ENCODE measurements at regions of chr3 and their contacts with region 1.

Region 1: GRCh38 chr3:151468284-151468917 is 7.5 kb upstream of the IGSF10 start:
- DNase-seq: peak; percentile 48
- ATAC-seq: peak; percentile 60
- H3K4me3 Mint-ChIP-seq: no peak overlapping the region
- H3K27ac Mint-ChIP-seq: no peak overlapping the region
- H3K4me1 Mint-ChIP-seq: no peaks in the 10 kb centered on the region
- H3K27me3 Mint-ChIP-seq: peaks cover 20% of the 10 kb centered on the region

Region 2: GRCh38 chr3:150890298-150891230 is 577.8 kb before region 1 on chr3:
- CTCF ChIA-PET with region 1: no interaction called
- DNase-seq: no peak
- ATAC-seq: no peak
- H3K4me3 Mint-ChIP-seq: no peak overlapping the region
- H3K27ac Mint-ChIP-seq: no peak overlapping the region
- H3K4me1 Mint-ChIP-seq: no peaks in the 10 kb centered on the region
- H3K27me3 Mint-ChIP-seq: peaks cover 20% of the 10 kb centered on the region

Region 3: DNA sequence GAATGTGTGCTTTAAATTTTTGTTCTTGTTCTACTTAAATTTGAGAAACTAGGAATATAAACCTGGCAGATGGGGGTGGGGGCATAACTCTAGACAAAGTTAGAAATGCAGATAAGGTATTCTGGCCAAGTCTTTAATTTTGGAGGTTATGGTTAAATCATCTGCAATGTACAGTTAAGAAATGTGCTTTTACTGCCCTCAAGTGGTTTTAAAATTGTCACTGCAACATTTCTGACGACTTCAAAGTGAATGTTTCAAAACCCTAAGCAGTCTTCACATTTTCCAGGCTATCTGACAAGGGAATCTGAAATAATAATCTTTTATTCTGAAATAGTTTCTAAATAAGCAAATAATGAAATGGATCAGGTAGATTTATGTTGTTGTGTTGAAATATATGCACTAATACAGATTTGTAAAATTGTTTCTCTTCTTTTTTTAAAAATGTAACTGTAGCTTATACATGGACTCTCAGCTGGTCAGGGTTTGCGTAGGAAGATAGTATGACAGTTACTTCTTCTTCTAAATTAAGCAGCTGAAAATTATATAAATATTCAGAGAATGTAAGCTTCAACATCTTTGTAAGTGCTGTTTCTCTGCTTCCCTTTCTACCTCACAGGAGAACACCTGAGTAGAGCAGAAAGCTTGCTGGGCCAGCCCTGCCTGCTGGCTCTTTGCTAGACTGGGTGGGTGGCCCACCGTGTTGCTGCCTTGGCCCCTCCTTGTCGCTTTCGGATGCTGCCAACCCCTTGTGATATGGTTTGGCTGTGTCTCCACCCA is 450.0 kb after region 1 on chr3:
- CTCF ChIA-PET with region 1: interaction called, 10 read pairs
- DNase-seq: no peak
- ATAC-seq: peak; percentile 47
- H3K4me3 Mint-ChIP-seq: no peak overlapping the region
- H3K27ac Mint-ChIP-seq: no peak overlapping the region
- H3K4me1 Mint-ChIP-seq: no peaks in the 10 kb centered on the region
- H3K27me3 Mint-ChIP-seq: peaks cover 9% of the 10 kb centered on the region